Natural killer cell (primary cell): ENCODE measurements at regions of chr1 and their contacts with region 1.

Region 1: GRCh38 chr1:9629445-9630201 is 21.9 kb upstream of the PIK3CD start:
- DNase-seq: peak; percentile 67 to 88
- ATAC-seq: peak; percentile 40 to 72 (median 46)
- H3K4me3 ChIP-seq: peak overlapping the region; percentile 70
- H3K4me3 Mint-ChIP-seq: peak overlapping the region; percentile 91
- H3K27ac ChIP-seq: peak overlapping the region; percentile 85
- H3K27ac Mint-ChIP-seq: peak overlapping the region; percentile 87 to 99
- H3K4me1 ChIP-seq: peaks cover 65% of the 10 kb centered on the region
- H3K4me1 Mint-ChIP-seq: peaks cover 55 to 60% of the 10 kb centered on the region in 2 donors
- H3K27me3 ChIP-seq: no peaks in the 10 kb centered on the region
- H3K27me3 Mint-ChIP-seq: no peaks in the 10 kb centered on the region
- CTCF ChIP-seq: no peak

Region 2: GRCh38 chr1:9428601-9429341 is 200.9 kb before region 1 on chr1:
- intact Hi-C with region 1: no loop called
- DNase-seq: peak; percentile 99 to 100
- ATAC-seq: peak; percentile 86 to 94 (median 92)
- H3K4me3 ChIP-seq: peak overlapping the region; percentile 44
- H3K4me3 Mint-ChIP-seq: peak overlapping the region; percentile 97
- H3K27ac ChIP-seq: peak overlapping the region; percentile 72
- H3K27ac Mint-ChIP-seq: peak overlapping the region; percentile 91
- H3K4me1 ChIP-seq: peaks cover 40% of the 10 kb centered on the region
- H3K4me1 Mint-ChIP-seq: peaks cover 37 to 41% of the 10 kb centered on the region in 2 donors
- H3K27me3 ChIP-seq: peaks cover 8% of the 10 kb centered on the region
- H3K27me3 Mint-ChIP-seq: peaks cover 0 to 28% of the 10 kb centered on the region in 2 donors
- CTCF ChIP-seq: no peak

Region 3: GRCh38 chr1:9651565-9652378 is 22.1 kb after region 1 on chr1 and contains the start of gene PIK3CD:
- intact Hi-C with region 1: loop called (anchors 1 kb)
- DNase-seq: peak; percentile 51 to 74
- ATAC-seq: peak; percentile 29 to 62 (median 52)
- H3K4me3 ChIP-seq: peak within 1 kb of the TSS; percentile 75
- H3K4me3 Mint-ChIP-seq: peak within 1 kb of the TSS; percentile 93
- H3K27ac ChIP-seq: peak within 1 kb of the TSS; percentile 70
- H3K27ac Mint-ChIP-seq: peak within 1 kb of the TSS; percentile 92 to 96
- H3K4me1 ChIP-seq: peaks cover 53% of the 10 kb centered on the region
- H3K4me1 Mint-ChIP-seq: peaks cover 42 to 50% of the 10 kb centered on the region in 2 donors
- H3K27me3 ChIP-seq: no peaks in the 10 kb centered on the region
- H3K27me3 Mint-ChIP-seq: no peaks in the 10 kb centered on the region
- CTCF ChIP-seq: no peak
- total RNA-seq, gene PIK3CD: 171 to 240 (median 198) TPM

Region 4: DNA sequence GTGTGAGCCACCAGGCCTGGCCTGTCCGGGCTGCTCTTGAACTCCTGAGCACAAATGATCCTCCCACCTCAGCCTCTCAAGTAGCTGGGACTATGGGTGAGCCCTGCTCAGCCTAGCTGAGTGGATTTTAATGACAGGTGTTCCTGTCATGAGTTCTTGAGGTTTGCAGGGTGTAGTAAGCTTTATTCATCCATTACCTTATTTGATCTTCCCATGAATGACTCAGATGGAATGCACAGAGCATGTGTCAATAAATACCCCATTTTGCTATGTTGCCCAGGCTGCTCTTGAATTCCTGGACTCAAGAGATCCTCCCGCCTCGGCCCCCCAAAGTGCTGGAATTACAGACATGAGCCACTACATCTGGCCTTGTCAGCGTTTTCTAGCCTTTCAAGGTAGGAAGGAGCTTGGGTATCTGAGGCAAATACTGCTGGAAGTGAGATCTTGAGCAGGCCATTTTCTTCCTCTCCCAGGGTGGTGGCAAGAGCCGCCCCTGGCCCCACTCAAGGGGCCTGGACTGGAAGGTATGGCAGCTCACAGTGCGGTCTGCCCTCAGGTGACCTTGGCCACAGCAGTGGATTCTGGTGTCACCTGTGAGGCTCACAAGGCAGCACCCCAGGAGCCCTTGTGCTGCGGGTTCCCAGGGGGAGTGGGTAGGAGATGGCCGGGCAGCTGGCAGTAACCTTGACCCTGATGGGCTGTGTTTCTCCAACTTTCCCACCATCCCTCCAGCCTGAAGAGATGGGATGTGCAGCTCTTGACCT is 41.9 kb after region 1 on chr1:
- intact Hi-C with region 1: no loop called
- DNase-seq: no peak
- ATAC-seq: no peak
- H3K4me3 ChIP-seq: no peak overlapping the region
- H3K4me3 Mint-ChIP-seq: no peak overlapping the region
- H3K27ac ChIP-seq: no peak overlapping the region
- H3K27ac Mint-ChIP-seq: peak overlapping the region; percentile 79 to 85
- H3K4me1 ChIP-seq: peaks cover 67% of the 10 kb centered on the region
- H3K4me1 Mint-ChIP-seq: peaks cover 49 to 62% of the 10 kb centered on the region in 2 donors
- H3K27me3 ChIP-seq: no peaks in the 10 kb centered on the region
- H3K27me3 Mint-ChIP-seq: no peaks in the 10 kb centered on the region
- CTCF ChIP-seq: no peak

Region 5: DNA sequence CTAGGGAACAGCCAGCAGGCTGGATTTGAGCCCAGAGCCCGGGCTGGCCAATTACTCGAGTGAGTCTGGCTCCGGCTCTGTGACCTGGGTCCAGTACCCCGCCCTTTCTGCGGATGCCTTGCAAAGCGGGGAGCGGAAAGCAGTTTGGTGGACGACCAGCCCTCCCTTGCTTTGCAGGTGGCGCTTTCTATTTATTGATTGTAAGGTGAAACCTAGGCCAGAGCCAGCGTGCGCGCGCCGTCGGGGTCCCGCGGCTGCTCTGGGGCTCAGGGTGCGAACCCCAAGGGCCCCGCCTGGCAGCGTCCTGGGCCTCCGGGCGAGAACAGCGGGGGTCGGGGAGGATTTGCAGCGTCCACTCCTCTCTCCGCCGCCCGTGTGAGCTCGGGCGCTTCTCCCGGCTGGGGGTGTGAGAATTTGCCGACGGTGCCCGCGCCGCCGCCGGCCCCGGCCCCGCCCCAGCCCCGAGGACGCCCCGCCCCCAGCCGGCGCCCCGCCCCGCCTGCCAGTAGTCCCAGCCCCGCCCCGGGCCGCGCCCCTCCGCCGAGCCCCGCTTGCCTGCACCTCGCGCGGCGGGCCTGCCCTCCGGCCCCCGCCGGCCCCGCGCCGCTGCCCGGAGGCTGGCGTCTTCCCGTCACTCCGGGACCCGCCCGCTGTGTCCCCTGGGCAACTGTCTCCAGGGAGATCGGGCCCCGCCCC is 59.5 kb after region 1 on chr1:
- intact Hi-C with region 1: loop called (anchors 1 kb)
- DNase-seq: peak; percentile 83 to 84
- ATAC-seq: peak; percentile 67 to 87 (median 79)
- H3K4me3 ChIP-seq: peak overlapping the region; percentile 37
- H3K4me3 Mint-ChIP-seq: peak overlapping the region; percentile 83
- H3K27ac ChIP-seq: peak overlapping the region; percentile 22
- H3K27ac Mint-ChIP-seq: peak overlapping the region; percentile 95
- H3K4me1 ChIP-seq: peaks cover 77% of the 10 kb centered on the region
- H3K4me1 Mint-ChIP-seq: peaks cover 65 to 78% of the 10 kb centered on the region in 2 donors
- H3K27me3 ChIP-seq: no peaks in the 10 kb centered on the region
- H3K27me3 Mint-ChIP-seq: no peaks in the 10 kb centered on the region
- CTCF ChIP-seq: no peak

Region 6: GRCh38 chr1:9717193-9718005 is 87.8 kb after region 1 on chr1:
- intact Hi-C with region 1: loop called (anchors 2 kb)
- DNase-seq: peak; percentile 80 to 95
- ATAC-seq: peak; percentile 83 to 94 (median 91)
- H3K4me3 ChIP-seq: peak overlapping the region; percentile 38
- H3K4me3 Mint-ChIP-seq: peak overlapping the region; percentile 89
- H3K27ac ChIP-seq: peak overlapping the region; percentile 74
- H3K27ac Mint-ChIP-seq: peak overlapping the region; percentile 96 to 100
- H3K4me1 ChIP-seq: peaks cover 96% of the 10 kb centered on the region
- H3K4me1 Mint-ChIP-seq: peaks cover 32 to 44% of the 10 kb centered on the region in 2 donors
- H3K27me3 ChIP-seq: no peaks in the 10 kb centered on the region
- H3K27me3 Mint-ChIP-seq: no peaks in the 10 kb centered on the region
- CTCF ChIP-seq: no peak

Region 7: DNA sequence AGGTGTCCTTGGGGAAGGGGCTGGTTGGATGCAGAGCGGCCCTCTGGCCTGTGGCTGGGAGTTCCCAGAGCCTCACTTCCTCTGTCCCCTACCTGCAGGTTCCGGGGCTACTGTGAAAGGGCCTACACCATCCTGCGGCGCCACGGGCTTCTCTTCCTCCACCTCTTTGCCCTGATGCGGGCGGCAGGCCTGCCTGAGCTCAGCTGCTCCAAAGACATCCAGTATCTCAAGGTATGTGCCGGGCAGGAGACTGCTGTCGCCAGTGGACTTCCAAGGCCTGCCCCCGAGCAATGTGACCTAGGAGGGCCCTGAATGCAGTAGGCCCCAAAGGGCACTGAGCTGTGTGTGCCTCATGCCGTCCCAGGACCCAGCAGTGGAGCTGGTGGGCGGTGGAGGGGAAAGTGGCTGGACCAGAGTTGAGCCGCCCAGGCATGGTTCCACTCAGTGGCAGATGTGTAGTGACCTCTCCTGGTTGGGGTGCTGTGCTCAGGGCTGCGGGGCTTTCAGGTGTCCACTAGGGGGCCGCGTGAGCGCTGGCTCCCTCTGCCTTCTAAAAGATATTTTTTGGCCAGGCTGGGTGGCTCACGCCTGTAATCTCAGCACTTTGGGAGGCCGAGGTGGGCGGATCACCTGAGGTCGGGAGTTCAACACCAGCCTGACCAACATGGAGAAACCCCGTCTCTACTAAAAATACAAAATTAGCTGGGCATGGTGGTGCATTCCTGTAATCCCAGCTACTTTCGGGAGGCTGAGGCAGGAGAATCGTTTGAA is 95.3 kb after region 1 on chr1:
- intact Hi-C with region 1: loop called (anchors 1 kb)
- DNase-seq: peak; percentile 67 to 86
- ATAC-seq: peak; percentile 79 to 86 (median 82)
- H3K4me3 ChIP-seq: no peak overlapping the region
- H3K4me3 Mint-ChIP-seq: no peak overlapping the region
- H3K27ac ChIP-seq: no peak overlapping the region
- H3K27ac Mint-ChIP-seq: peak overlapping the region; percentile 50 to 76
- H3K4me1 ChIP-seq: peaks cover 57% of the 10 kb centered on the region
- H3K4me1 Mint-ChIP-seq: peaks cover 24 to 32% of the 10 kb centered on the region in 2 donors
- H3K27me3 ChIP-seq: no peaks in the 10 kb centered on the region
- H3K27me3 Mint-ChIP-seq: no peaks in the 10 kb centered on the region
- CTCF ChIP-seq: peak; percentile 89

Region 8: GRCh38 chr1:9867408-9868243 is 238.0 kb after region 1 on chr1:
- intact Hi-C with region 1: loop called (anchors 1 kb)
- DNase-seq: peak; percentile 88 to 94
- ATAC-seq: peak; percentile 91 to 100 (median 98)
- H3K4me3 ChIP-seq: no peak overlapping the region
- H3K4me3 Mint-ChIP-seq: no peak overlapping the region
- H3K27ac ChIP-seq: no peak overlapping the region
- H3K27ac Mint-ChIP-seq: no peak overlapping the region
- H3K4me1 ChIP-seq: peaks cover 6% of the 10 kb centered on the region
- H3K4me1 Mint-ChIP-seq: peaks cover 4 to 8% of the 10 kb centered on the region in 2 donors
- H3K27me3 ChIP-seq: no peaks in the 10 kb centered on the region
- H3K27me3 Mint-ChIP-seq: no peaks in the 10 kb centered on the region
- CTCF ChIP-seq: peak; percentile 91